Left lung (tissue), 14 donors: ENCODE measurements at regions of chr11 and their contacts with region 1.

Region 1: DNA sequence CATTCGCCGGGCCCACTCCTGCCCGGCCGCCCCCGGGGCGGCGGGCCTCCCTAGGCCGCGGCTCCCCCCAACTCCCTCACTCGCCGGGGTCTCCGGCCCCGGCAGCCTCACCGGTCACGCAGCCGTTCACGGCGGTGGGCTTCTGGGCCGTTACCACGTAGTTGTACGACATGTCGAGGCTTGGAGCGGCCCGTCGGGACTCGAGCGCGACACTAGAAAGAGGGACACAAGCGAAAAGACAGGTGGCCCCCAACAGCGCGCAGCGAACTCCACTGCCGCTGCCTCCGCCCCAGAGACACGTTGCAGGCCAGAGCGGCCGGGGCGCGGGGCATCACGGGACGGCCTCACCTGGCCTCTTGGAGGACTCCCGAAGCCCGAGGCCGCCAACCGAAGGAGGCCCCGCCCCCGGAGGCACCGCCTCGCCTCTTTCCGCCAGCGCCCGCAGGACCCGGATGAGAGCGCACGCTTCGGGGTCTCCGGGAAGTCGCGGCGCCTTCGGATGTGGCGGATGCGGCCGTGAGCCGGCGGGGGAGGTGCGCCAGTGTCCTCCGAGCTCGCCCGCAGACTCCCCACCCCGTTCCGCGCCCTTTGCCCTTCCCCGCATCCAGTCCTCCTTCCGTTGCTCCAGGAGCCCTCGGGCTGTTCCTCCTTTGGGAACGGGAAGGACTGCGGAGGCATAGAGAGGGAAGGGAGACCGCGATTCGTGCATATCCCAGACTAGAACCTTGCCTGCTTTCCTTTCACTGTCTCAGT is at the starts of genes DDB1 and TKFC:
- DNase-seq: peak; percentile 92 to 99 (median 96)
- ATAC-seq: peak; percentile 97
- H3K4me3 ChIP-seq: peak within 1 kb of the TSS; percentile 97 to 100
- H3K27ac ChIP-seq: peak within 1 kb of the TSS; percentile 84 to 91
- H3K4me1 ChIP-seq: peaks cover 6 to 42% of the 10 kb centered on the region in 2 donors
- H3K27me3 ChIP-seq: no peaks in the 10 kb centered on the region
- CTCF ChIP-seq: no peak
- polyA plus RNA-seq, gene DDB1: 173 to 203 (median 187) TPM
- polyA plus RNA-seq, gene TKFC: 26.6 to 33.7 (median 31.4) TPM

Region 2: GRCh38 chr11:61120706-61121191 is 212.2 kb before region 1 on chr11:
- intact Hi-C with region 1: no loop called
- DNase-seq: peak in 1 of 4 donors; percentile 33
- ATAC-seq: no peak
- H3K4me3 ChIP-seq: no peak overlapping the region
- H3K27ac ChIP-seq: no peak overlapping the region
- H3K4me1 ChIP-seq: no peaks in the 10 kb centered on the region
- H3K27me3 ChIP-seq: peaks cover 0 to 12% of the 10 kb centered on the region in 2 donors
- CTCF ChIP-seq: no peak

Region 3: GRCh38 chr11:61369372-61370219 is 36.6 kb after region 1 on chr11:
- intact Hi-C with region 1: loop called in 1 of 2 experiments (anchors 5 kb)
- DNase-seq: peak in 2 of 4 donors; percentile 37 to 60
- ATAC-seq: peak; percentile 86
- H3K4me3 ChIP-seq: no peak overlapping the region
- H3K27ac ChIP-seq: no peak overlapping the region
- H3K4me1 ChIP-seq: peaks cover 0 to 7% of the 10 kb centered on the region in 2 donors
- H3K27me3 ChIP-seq: no peaks in the 10 kb centered on the region
- CTCF ChIP-seq: no peak

Region 4: GRCh38 chr11:61384271-61385242 is 51.6 kb after region 1 on chr11:
- intact Hi-C with region 1: loop called in 1 of 2 experiments (anchors 2 kb)
- DNase-seq: no peak
- ATAC-seq: peak; percentile 23
- H3K4me3 ChIP-seq: no peak overlapping the region
- H3K27ac ChIP-seq: no peak overlapping the region
- H3K4me1 ChIP-seq: peaks cover 0 to 9% of the 10 kb centered on the region in 2 donors
- H3K27me3 ChIP-seq: no peaks in the 10 kb centered on the region
- CTCF ChIP-seq: no peak